CD14-positive monocyte (primary cell): ENCODE measurements at regions of chr7 and their contacts with region 1.

Region 1: GRCh38 chr7:27150568-27151340 is 1.6 kb downstream of the HOXA3 start:
- DNase-seq: peak; percentile 64 to 70 (median 69)
- H3K4me3 ChIP-seq: peak overlapping the region in 2 of 3 experiments; percentile 14 to 66
- H3K4me3 Mint-ChIP-seq: peak overlapping the region; percentile 78 to 94
- H3K27ac ChIP-seq: no peak overlapping the region
- H3K27ac Mint-ChIP-seq: no peak overlapping the region
- H3K4me1 ChIP-seq: peaks cover 56 to 61% of the 10 kb centered on the region in 2 donors
- H3K4me1 Mint-ChIP-seq: peaks cover 59% of the 10 kb centered on the region
- H3K27me3 ChIP-seq: peaks cover 92 to 100% of the 10 kb centered on the region in 2 donors
- H3K27me3 Mint-ChIP-seq: peaks cover 94 to 100% (median 99%) of the 10 kb centered on the region in 3 donors
- CTCF ChIP-seq: peak; percentile 90

Region 2: DNA sequence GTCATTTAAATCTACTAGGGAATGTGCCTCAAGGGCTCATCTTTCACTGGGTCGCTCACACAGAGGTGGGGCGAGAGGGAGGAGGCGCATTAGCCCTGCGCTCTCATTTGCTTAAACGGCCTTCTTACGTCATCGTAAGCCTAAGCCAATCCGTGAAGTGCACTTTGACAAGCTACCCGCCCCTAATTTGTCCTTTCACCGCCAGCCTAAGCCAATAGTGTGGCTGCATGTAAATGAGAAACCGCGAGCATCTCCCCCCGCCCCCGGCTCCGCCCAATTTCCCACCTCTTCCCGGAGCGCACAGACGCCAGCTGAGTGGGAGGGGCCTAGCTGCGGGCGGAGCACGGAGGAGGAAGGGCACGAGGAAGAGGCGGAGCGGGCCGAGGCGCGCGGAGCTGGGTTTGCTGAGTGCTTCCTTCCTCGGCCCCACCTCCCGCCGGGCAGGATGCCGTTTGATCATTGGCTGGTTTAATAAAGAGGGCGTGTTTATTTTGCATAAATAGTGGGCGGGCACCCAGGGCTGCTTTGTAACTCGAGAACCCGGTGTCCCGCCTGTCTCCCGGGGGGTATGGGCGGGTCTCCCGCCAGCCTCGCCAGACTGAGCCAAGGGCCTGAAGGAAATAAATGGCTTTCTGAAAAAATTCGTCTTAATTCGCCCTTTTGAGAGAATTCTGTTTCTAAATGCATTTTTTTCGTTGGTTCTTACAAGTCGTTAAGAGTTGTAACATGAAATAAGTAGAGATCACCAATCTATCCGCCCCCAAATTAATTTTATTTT is 1288.3 kb before region 1 on chr7:
- intact Hi-C with region 1: loop called (anchors 5 kb)
- DNase-seq: peak; percentile 70 to 87 (median 75)
- H3K4me3 ChIP-seq: peak overlapping the region in 2 of 3 experiments; percentile 6 to 69
- H3K4me3 Mint-ChIP-seq: peak overlapping the region in 1 of 2 donors; percentile 47
- H3K27ac ChIP-seq: no peak overlapping the region
- H3K27ac Mint-ChIP-seq: peak overlapping the region in 1 of 7 donors; percentile 46
- H3K4me1 ChIP-seq: peaks cover 21 to 22% of the 10 kb centered on the region in 2 donors
- H3K4me1 Mint-ChIP-seq: peaks cover 31% of the 10 kb centered on the region
- H3K27me3 ChIP-seq: peaks cover 95 to 100% of the 10 kb centered on the region in 2 donors
- H3K27me3 Mint-ChIP-seq: peaks cover 19 to 25% (median 23%) of the 10 kb centered on the region in 3 donors
- CTCF ChIP-seq: no peak

Region 3: DNA sequence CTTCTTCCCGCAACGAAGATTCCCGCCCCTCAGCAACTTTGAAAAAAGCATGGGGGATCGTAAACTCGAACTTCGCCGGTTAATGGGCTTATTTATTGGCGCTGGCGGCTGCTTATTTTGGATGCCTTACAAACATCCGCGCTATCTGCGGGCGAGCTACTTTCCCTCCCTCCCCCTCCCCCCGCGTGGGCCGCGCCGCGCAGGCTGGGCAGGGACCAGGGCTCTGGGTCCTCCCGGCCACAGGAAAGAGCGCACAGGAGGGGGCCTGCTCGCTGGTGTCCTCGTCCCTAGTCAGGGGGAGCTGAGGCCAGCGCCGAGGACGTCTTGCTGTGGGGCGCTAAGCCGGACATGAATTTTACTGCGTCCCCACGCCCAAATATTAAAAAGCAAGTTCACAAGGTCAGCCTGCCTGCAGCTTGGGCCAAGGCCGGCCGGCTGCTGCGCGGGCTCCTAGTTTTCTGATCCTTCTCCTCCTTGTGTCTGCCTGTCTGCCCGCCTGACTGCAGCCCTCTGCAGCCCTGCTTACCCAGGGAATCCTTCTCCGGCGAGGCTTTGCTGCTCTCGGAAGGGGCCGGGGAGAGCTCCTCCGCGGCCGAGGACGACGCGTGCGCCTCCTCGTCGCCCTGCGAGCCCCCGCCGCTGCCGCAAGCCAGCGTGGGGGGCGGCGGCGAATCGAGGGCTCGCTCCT is 22.2 kb after region 1 on chr7:
- intact Hi-C with region 1: loop called in 1 of 2 experiments (anchors 2 kb)
- DNase-seq: no peak
- H3K4me3 ChIP-seq: peak overlapping the region; percentile 23 to 76 (median 39)
- H3K4me3 Mint-ChIP-seq: peak overlapping the region; percentile 74 to 89
- H3K27ac ChIP-seq: no peak overlapping the region
- H3K27ac Mint-ChIP-seq: no peak overlapping the region
- H3K4me1 ChIP-seq: peaks cover 44 to 62% of the 10 kb centered on the region in 2 donors
- H3K4me1 Mint-ChIP-seq: peaks cover 41% of the 10 kb centered on the region
- H3K27me3 ChIP-seq: peaks cover 65 to 98% of the 10 kb centered on the region in 2 donors
- H3K27me3 Mint-ChIP-seq: peaks cover 85 to 98% (median 91%) of the 10 kb centered on the region in 3 donors
- CTCF ChIP-seq: no peak

Region 4: DNA sequence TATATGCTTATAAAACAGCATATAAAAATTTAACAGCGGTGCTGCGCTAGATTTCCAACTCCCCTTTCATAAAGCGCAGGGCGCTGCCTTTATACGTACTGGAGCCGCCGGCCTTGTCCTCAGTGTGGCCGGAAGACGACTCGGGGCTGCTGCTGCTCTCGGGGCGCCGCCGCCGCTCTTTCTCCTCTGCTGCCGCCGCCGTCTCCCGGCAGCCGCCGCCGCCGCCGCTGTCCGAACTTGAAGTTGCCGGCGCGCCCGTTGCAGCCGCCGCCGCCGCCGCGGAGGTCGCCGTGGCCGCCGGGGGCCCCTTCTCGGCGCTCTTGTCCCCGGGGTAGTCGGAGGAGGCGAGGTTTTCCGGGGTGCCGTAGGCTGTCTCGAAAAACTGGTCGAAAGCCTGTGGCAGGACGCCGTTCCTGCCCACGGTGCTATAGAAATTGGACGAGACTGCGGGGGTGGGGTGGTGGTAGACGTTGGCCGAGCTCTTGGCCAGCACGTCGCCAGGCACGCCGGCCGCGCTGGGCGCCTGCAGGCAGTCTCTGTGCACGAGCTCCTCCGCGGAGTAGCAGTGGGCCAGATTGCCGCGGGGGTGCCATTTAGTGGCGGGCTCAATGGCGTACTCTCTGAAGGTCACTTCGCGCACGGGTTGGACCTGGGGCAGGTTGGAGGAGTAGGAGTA is 33.7 kb after region 1 on chr7:
- intact Hi-C with region 1: loop called (anchors 5 kb)
- DNase-seq: peak in 1 of 3 donors; percentile 44
- H3K4me3 ChIP-seq: peak overlapping the region in 2 of 3 experiments; percentile 20 to 71
- H3K4me3 Mint-ChIP-seq: peak overlapping the region; percentile 72 to 93
- H3K27ac ChIP-seq: no peak overlapping the region
- H3K27ac Mint-ChIP-seq: peak overlapping the region in 1 of 7 donors; percentile 41
- H3K4me1 ChIP-seq: peaks cover 55 to 56% of the 10 kb centered on the region in 2 donors
- H3K4me1 Mint-ChIP-seq: peaks cover 62% of the 10 kb centered on the region
- H3K27me3 ChIP-seq: peaks cover 81 to 99% of the 10 kb centered on the region in 2 donors
- H3K27me3 Mint-ChIP-seq: peaks cover 94 to 99% (median 99%) of the 10 kb centered on the region in 3 donors
- CTCF ChIP-seq: no peak